ENCODE measurements at regions of chr17 and their contacts with region 1.

Region 1: DNA sequence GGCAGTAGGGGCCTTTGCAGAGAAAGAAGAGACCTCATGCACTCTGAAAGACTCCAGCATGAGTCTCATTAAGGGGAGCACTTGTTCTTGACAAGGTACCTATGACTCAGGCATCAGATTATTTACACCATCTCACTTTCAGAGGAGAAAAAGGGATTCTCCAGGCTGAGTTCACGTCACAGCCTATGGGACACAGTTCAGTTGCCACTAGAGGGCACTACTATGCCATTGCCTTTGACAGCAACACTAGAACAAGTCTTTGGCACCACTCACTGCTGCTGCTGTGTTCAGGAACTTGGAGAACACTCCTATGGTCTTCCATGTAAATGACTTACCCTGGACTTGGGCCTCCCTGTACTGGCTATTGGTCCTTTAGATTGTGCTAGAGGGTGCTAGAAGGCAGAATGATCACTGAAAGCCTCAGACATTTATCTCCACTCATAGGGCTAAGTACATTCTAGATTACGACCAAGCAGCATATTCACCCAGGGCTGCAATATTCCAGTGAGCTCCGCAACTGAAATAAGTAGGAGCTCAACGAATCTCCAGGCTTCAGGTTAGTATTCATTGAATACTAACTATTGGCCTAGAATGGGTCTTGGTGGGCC is 225.1 kb upstream of the CA10 start:
- DNase-seq: peak; percentile 66 to 69
- H3K4me3 ChIP-seq: no peak overlapping the region
- H3K27ac ChIP-seq: no peak overlapping the region
- H3K4me1 ChIP-seq: no peaks in the 10 kb centered on the region
- H3K27me3 ChIP-seq: no peaks in the 10 kb centered on the region
- CTCF ChIP-seq: peak; percentile 62 to 94 (median 78)
- EP300 ChIP-seq: no peak
- POLR2A ChIP-seq: no peak
- RAD21 ChIP-seq: peak; percentile 95 to 96

Region 2: GRCh38 chr17:52336816-52337215 is 46.8 kb before region 1 on chr17:
- CTCF ChIA-PET with region 1: no interaction called
- POLR2A ChIA-PET with region 1: no interaction called
- DNase-seq: no peak
- H3K4me3 ChIP-seq: no peak overlapping the region
- H3K27ac ChIP-seq: no peak overlapping the region
- H3K4me1 ChIP-seq: no peaks in the 10 kb centered on the region
- H3K27me3 ChIP-seq: no peaks in the 10 kb centered on the region
- CTCF ChIP-seq: no peak
- EP300 ChIP-seq: no peak
- POLR2A ChIP-seq: no peak
- RAD21 ChIP-seq: no peak

Region 3: DNA sequence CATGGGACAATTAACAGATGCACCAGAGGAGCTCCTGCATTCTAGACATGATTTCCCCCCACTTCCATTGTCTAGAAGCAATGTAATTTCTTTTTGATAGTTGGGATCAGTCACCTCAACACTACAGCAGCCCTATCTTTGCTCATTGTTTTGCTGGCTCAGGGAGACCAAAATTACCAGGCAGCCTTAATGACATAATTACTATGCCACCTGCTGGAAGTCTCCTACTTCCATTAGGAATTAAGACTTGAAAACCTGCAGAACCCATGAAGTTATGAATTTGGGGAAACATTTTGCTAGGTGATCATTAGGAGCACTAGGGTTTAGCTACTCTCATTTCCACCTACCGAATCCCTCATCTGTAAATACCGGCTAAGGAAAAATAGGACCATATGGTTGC is 87.0 kb after region 1 on chr17:
- CTCF ChIA-PET with region 1: interaction called, 24 read pairs
- POLR2A ChIA-PET with region 1: no interaction called
- DNase-seq: no peak
- H3K4me3 ChIP-seq: no peak overlapping the region
- H3K27ac ChIP-seq: no peak overlapping the region
- H3K4me1 ChIP-seq: no peaks in the 10 kb centered on the region
- H3K27me3 ChIP-seq: no peaks in the 10 kb centered on the region
- CTCF ChIP-seq: peak in 1 of 3 experiments; percentile 8; a peak in 1 of 4 replicates
- EP300 ChIP-seq: no peak
- POLR2A ChIP-seq: no peak
- RAD21 ChIP-seq: peak; percentile 35 to 44; a peak in 2 of 4 replicates

Region 4: GRCh38 chr17:52594516-52594915 is 210.9 kb after region 1 on chr17:
- CTCF ChIA-PET with region 1: interaction called, 14 read pairs
- POLR2A ChIA-PET with region 1: no interaction called
- DNase-seq: no peak
- H3K4me3 ChIP-seq: no peak overlapping the region
- H3K27ac ChIP-seq: no peak overlapping the region
- H3K4me1 ChIP-seq: no peaks in the 10 kb centered on the region
- H3K27me3 ChIP-seq: no peaks in the 10 kb centered on the region
- CTCF ChIP-seq: no peak
- EP300 ChIP-seq: no peak
- POLR2A ChIP-seq: no peak
- RAD21 ChIP-seq: no peak